ENCODE measurements at regions of chr9 and their contacts with region 1.

Region 1: GRCh38 chr9:105414947-105415661 is 32.7 kb upstream of the FSD1L start:
- DNase-seq: peak; percentile 74
- ATAC-seq: peak; percentile 82
- H3K4me3 Mint-ChIP-seq: no peak overlapping the region
- H3K27ac Mint-ChIP-seq: no peak overlapping the region
- H3K4me1 Mint-ChIP-seq: peaks cover 26% of the 10 kb centered on the region
- H3K27me3 Mint-ChIP-seq: peaks cover 37% of the 10 kb centered on the region

Region 2: DNA sequence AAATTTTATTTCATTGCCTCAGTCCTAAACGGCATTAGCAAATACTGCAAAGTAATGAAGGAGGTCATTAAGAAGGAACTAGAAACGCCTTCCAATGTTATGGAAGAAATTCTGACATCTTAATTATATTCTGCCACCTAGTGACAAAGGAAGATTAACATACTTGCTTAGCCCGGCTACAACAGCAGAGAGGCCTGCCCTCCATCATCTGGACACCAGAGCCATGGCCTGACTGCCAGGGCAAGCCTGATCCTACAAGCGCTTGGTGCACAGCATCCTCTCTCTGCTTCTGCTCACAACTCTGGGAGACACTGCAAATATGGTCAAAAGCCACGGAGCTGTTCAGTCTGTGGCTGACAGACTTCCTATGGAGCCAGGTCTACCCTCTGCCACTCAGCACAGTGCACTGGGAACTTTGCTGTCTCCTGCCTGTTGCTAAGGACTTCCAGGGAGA is 257.9 kb before region 1 on chr9:
- CTCF ChIA-PET with region 1: interaction called, 17 read pairs
- POLR2A ChIA-PET with region 1: no interaction called
- DNase-seq: peak; percentile 33
- ATAC-seq: peak; percentile 71
- H3K4me3 Mint-ChIP-seq: no peak overlapping the region
- H3K27ac Mint-ChIP-seq: no peak overlapping the region
- H3K4me1 Mint-ChIP-seq: peaks cover 4% of the 10 kb centered on the region
- H3K27me3 Mint-ChIP-seq: peaks cover 6% of the 10 kb centered on the region

Region 3: DNA sequence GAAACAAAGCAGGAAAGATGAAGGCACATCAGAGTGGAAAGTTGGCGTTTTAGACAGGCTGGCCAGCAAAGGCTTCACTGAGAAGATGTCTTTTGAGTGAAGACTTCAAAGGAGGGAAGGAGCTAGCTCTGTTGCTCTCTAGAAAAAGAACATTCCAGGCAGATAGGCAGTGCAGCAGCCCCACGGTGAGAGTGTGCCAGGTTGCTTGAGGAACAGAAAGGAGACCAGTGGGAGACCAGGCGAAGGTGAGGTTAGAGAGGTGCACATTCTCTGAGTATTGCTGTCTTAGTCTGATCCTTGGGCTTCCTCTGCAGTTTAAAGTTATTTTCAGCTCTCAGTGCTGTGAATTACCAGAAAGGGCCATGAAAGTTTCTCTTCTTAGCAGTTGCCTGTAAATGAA is 86.8 kb before region 1 on chr9:
- CTCF ChIA-PET with region 1: no interaction called
- POLR2A ChIA-PET with region 1: no interaction called
- DNase-seq: no peak
- ATAC-seq: no peak
- H3K4me3 Mint-ChIP-seq: no peak overlapping the region
- H3K27ac Mint-ChIP-seq: no peak overlapping the region
- H3K4me1 Mint-ChIP-seq: no peaks in the 10 kb centered on the region
- H3K27me3 Mint-ChIP-seq: no peaks in the 10 kb centered on the region